PC-9 (cell line): ENCODE measurements at regions of chr19 and their contacts with region 1.

Region 1: GRCh38 chr19:9132422-9132821 is 5.7 kb upstream of the OR7G3 start:
- DNase-seq: no peak
- H3K4me3 ChIP-seq: no peak overlapping the region
- H3K27ac ChIP-seq: no peak overlapping the region
- H3K4me1 ChIP-seq: peaks cover 30% of the 10 kb centered on the region
- H3K27me3 ChIP-seq: no peaks in the 10 kb centered on the region
- CTCF ChIP-seq: no peak

Region 2: DNA sequence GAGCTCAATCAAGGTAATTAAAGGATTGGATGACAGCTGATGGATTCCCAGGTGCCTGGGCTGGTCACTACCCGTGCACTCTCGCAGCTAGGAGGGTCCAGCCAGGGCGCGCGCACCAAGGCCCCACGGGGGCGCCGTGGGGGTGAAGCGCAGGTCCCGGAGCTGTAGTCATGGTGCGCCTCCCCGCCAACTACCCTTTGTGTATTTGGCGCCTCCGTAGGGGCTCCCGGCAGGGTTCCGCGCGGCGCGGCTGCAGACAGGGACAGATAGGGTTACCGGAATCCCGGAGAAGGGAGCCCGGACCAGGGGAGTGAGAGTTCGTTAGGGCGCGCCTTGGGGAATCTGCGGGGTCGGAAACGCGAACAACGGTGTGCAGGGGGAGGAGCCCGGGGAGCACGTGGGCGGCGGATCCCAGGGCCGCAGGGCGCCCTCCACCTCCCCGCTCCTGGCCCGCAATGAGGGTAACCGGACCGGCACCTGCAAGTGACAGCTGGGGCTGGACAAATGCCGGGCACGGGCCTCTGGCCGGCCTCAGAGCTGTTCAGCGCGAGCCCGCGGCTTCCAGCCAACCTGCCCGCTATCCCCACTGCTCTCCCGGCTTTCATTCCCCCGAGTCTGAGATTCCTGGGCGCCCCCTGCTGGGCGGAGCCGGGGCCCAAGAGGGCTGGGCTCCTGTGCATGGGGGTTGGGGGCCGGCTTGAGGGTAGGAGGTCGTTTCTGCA is 626.6 kb before region 1 on chr19:
- CTCF ChIA-PET with region 1: no interaction called
- POLR2A ChIA-PET with region 1: no interaction called
- intact Hi-C with region 1: no loop called
- DNase-seq: peak in 1 of 2 experiments; percentile 72
- H3K4me3 ChIP-seq: peak overlapping the region; percentile 73
- H3K27ac ChIP-seq: no peak overlapping the region
- H3K4me1 ChIP-seq: no peaks in the 10 kb centered on the region
- H3K27me3 ChIP-seq: no peaks in the 10 kb centered on the region
- CTCF ChIP-seq: peak; percentile 94

Region 3: DNA sequence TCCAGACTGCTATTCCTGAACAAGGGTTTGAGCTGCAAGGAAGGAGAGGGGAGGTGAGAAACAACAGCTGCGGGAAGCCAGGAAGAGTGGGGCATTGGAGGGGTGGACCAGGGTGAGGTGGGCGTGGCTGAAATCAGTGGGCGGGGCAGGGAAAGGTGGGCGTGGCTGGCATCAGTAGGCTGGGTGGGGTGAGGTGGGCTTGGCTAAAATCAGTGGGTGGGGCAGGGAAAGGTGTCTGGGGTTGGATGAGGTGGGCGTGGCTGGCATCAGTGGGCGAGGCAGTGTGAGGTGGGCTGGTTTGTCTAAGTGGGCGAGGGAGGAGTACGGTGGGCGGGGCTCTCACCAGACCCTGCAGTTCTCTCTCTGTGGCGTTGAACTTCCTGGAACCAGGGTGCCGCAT is 209.8 kb before region 1 on chr19:
- CTCF ChIA-PET with region 1: no interaction called
- POLR2A ChIA-PET with region 1: no interaction called
- intact Hi-C with region 1: no loop called
- DNase-seq: peak in 1 of 2 experiments; percentile 23
- H3K4me3 ChIP-seq: no peak overlapping the region
- H3K27ac ChIP-seq: no peak overlapping the region
- H3K4me1 ChIP-seq: no peaks in the 10 kb centered on the region
- H3K27me3 ChIP-seq: no peaks in the 10 kb centered on the region
- CTCF ChIP-seq: no peak

Region 4: DNA sequence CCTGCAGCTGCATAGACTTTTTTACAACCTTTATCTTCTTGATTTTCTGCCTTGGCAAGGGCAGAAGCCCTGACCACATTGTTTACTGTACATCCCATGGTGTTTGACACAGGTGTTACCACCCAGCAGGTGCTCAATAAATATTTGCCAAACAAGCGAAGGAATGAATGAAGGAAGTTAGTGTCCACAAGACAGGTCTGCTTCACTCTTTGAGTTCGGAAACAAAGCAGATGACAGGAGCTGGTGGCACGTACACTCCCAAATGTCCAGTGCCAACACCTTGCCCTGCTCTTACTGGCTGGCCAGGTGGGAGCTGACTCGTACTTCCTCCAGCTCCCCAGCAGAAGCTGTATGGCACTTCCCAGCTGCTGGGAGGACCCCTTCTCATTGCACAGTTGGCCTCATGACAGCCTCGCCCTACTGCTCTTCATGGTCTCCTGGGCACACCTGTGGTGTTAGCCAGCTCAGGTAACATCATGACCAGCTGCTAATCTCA is 100.2 kb before region 1 on chr19:
- CTCF ChIA-PET with region 1: no interaction called
- POLR2A ChIA-PET with region 1: no interaction called
- intact Hi-C with region 1: no loop called
- DNase-seq: peak; percentile 81 to 100
- H3K4me3 ChIP-seq: no peak overlapping the region
- H3K27ac ChIP-seq: peak overlapping the region; percentile 52
- H3K4me1 ChIP-seq: peaks cover 27% of the 10 kb centered on the region
- H3K27me3 ChIP-seq: no peaks in the 10 kb centered on the region
- CTCF ChIP-seq: no peak

Region 5: GRCh38 chr19:10120538-10121189 is 988.2 kb after region 1 on chr19:
- CTCF ChIA-PET with region 1: interaction called, 17 read pairs
- POLR2A ChIA-PET with region 1: no interaction called
- intact Hi-C with region 1: no loop called
- DNase-seq: peak in 1 of 2 experiments; percentile 44
- H3K4me3 ChIP-seq: no peak overlapping the region
- H3K27ac ChIP-seq: no peak overlapping the region; the same call in 1 of the 2 replicates
- H3K4me1 ChIP-seq: peaks cover 8% of the 10 kb centered on the region; the same call in 1 of the 2 replicates
- H3K27me3 ChIP-seq: no peaks in the 10 kb centered on the region
- CTCF ChIP-seq: no peak